ENCODE measurements at regions of chr15 and their contacts with region 1.

Region 1: DNA sequence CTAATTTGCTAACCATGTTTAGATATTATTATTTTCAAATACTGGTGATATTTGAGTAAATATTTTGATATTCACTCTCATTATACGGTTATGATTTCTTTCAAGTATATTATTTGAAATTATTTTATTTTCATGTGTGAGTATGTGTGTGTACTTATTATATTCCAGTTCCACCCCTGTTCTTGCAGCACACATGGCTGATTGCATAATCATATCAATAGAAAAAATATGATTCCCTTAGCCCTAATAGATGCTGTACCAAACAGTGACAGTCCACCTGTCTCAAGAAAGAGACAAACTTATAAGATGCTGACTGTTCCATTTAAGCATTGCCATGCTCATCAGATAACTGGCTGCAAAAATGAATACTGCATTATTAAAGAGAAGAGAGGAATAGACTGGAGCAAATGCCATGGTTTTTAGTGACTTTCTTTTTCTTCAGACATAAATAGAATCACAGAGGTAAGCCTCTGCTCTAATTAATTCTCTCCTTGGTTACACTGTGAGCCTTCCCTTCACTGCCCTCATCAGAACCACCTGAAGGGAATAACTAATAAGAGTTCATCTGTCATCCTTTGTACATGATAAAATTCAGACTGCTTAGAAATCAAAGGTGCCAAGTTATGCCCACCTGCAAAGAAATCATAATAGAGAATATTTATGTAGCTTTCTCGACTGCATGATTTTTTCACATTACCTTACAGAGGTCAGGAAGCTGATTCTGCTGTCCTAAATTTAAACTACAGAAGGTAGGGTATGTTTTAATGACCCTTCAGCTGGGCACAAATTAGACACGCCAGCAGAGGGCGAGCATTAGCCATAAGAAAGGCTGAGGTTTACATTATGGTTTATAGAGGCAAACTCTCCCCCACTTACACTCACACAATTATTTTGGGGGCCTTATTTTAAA is 15.7 kb upstream of the UNC13C start:
- DNase-seq: peak in 1 of 2 experiments; percentile 7
- H3K4me3 ChIP-seq: no peak overlapping the region
- H3K27ac ChIP-seq: no peak overlapping the region
- H3K4me1 ChIP-seq: no peaks in the 10 kb centered on the region
- H3K27me3 ChIP-seq: no peaks in the 10 kb centered on the region
- CTCF ChIP-seq: peak; percentile 63

Region 2: DNA sequence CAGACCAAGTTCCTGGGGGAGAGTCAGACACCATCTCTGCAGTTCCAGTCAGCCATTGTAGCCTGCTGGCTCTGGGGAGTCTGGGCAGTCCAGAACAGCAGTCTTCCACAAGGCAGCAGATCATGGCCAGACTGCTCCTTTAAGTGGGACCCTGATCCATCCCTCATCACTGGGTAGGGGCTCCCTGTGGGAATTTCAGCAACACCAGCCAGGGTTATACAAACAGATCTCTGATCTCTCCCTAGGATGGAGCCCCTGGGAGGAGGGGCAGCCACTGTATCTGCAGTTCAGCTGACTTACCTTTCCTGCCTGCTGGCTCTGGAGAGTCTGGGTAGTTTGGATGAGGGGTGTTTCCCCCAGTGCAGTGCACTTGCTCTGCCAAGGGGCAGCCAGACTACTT is 26.4 kb before region 1 on chr15:
- CTCF ChIA-PET with region 1: no interaction called
- POLR2A ChIA-PET with region 1: no interaction called
- intact Hi-C with region 1: no loop called
- DNase-seq: no peak
- H3K4me3 ChIP-seq: no peak overlapping the region
- H3K27ac ChIP-seq: no peak overlapping the region
- H3K4me1 ChIP-seq: no peaks in the 10 kb centered on the region
- H3K27me3 ChIP-seq: no peaks in the 10 kb centered on the region
- CTCF ChIP-seq: no peak

Region 3: DNA sequence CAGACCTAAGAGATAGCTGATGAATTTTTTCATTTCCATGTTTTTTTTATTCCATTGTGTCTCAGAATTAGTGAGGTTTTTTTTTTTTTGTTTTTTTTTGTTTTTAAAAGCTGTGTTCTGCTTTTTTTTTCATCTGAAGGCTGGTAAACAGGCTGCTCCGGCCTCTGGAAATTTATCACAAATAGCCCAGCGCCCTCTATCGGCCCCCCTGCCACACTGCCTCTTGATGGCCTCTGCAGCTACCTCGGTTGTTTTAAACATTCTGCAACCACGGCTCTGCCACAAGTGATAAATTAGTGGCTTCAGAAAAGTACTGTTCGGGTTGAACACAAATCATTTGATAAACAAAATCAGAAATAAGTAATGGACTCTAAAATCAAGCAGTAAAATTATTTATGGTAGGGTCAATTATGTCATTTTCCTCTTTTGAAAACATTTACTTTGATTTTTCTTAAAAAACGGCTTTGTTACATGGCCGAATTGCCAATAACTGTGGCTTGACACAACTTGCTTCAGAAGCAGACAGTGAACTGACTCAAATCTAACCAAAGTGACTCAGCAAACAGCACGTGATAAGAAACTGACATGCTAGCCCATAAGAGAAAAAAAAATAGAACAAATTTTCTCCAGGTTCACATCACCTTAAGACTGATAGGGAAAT is 1146.4 kb after region 1 on chr15:
- CTCF ChIA-PET with region 1: no interaction called
- POLR2A ChIA-PET with region 1: no interaction called
- intact Hi-C with region 1: loop called (anchors 5 kb)
- DNase-seq: peak in 1 of 2 experiments; percentile 55
- H3K4me3 ChIP-seq: no peak overlapping the region
- H3K27ac ChIP-seq: no peak overlapping the region
- H3K4me1 ChIP-seq: no peaks in the 10 kb centered on the region
- H3K27me3 ChIP-seq: no peaks in the 10 kb centered on the region
- CTCF ChIP-seq: peak; percentile 71